Thyroid gland (tissue), 4 donors: ENCODE measurements at regions of chr6 and their contacts with region 1.

Region 1: DNA sequence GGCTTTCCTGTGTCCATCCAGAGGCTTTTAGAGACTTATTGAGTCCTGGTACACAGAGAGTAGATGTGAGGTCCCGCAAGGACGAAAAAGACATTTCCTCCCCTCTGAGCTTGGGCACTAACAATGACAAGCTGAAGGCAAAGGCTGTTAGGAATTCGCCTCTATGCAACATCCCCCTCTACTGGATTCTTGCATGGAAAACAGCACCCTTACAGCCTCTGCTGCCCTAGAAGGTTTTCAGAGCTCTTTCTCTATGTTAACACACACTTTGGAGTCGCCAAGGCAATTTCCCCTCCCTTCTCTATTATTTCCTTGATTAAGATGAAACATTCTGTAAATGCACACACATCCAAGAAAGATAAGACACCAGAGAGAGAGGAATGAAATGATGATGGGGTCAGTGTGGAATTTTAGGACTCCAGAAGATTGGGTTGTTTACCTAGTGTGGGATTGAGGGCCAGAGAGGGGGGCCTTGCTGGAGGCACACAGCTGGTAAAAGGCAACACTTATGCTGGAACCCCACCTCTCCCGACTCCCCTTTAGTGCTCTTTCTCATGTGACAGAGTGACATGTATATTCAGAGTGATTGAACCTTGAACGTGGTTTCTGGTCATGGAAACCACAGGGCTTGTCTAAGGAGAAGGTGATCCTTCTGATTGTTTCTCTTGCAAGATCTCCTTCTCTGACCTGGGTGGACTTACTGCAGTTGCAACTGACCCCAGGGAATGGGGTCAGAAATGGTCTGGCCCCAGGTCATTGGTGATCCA is 300.7 kb downstream of the CLIC5 start:
- DNase-seq: peak; percentile 49 to 52
- H3K4me3 ChIP-seq: no peak overlapping the region
- H3K27ac ChIP-seq: no peak overlapping the region
- H3K4me1 ChIP-seq: no peaks in the 10 kb centered on the region
- H3K27me3 ChIP-seq: no peaks in the 10 kb centered on the region
- CTCF ChIP-seq: peak; percentile 40 to 88 (median 76)
- POLR2A ChIP-seq: no peak

Region 2: GRCh38 chr6:44475779-44476434 is 1239.0 kb before region 1 on chr6:
- intact Hi-C with region 1: loop called (anchors 10 kb)
- DNase-seq: peak; percentile 83 to 89
- H3K4me3 ChIP-seq: no peak overlapping the region
- H3K27ac ChIP-seq: peak overlapping the region; percentile 52 to 96 (median 84)
- H3K4me1 ChIP-seq: peaks cover 18 to 34% of the 10 kb centered on the region in 2 donors
- H3K27me3 ChIP-seq: no peaks in the 10 kb centered on the region
- CTCF ChIP-seq: peak; percentile 65 to 99 (median 94)
- POLR2A ChIP-seq: peak in 1 of 2 donors; percentile 21

Region 3: GRCh38 chr6:44655412-44656342 is 1059.2 kb before region 1 on chr6:
- intact Hi-C with region 1: loop called (anchors 5 kb)
- DNase-seq: peak; percentile 72 to 79
- H3K4me3 ChIP-seq: no peak overlapping the region
- H3K27ac ChIP-seq: no peak overlapping the region
- H3K4me1 ChIP-seq: peaks cover 0 to 8% of the 10 kb centered on the region in 2 donors
- H3K27me3 ChIP-seq: no peaks in the 10 kb centered on the region
- CTCF ChIP-seq: peak; percentile 81 to 95 (median 90)
- POLR2A ChIP-seq: no peak

Region 4: DNA sequence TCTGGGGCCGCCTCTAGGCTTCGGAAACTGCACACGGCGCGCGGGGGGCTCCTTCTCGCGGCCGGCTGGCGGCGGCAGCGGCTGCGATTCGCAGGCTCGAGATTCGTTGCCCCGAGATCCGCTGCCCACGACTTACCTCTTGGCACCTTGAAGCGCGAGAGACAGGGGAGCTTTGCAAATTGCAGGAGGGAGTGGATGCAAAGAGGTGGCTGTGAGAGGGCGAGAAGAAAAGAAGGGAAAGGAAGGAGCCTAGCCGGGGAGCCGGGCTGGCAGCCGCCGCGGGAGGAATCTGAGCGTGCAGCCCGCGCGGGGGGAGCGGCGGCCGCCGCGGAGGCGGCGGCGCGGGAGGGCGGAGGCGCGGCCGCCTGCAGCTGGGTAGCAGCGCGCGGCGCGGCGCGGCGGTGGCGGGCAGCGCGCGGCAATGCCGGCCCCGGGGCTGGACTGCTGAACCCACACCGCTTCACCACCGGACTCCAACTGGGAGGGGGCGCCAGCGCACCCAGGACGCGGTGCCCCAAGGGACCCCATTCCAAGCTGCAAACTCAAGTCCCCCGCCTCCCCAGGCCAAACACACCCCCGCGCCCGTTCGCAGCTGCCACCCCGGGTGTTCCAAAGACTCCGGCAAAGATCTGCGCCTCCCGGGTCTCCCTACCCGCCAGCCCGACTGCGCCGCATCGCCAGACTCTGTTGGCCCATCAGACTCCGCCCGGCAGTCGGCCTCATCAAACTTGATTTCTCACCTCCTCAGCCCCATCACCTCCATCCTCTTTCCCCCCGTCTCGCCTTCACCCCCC is 293.0 kb before region 1 on chr6:
- intact Hi-C with region 1: loop called (anchors 10 kb)
- DNase-seq: peak; percentile 45 to 59
- H3K4me3 ChIP-seq: peak overlapping the region; percentile 15 to 48 (median 43)
- H3K27ac ChIP-seq: peak overlapping the region in 2 of 3 donors; percentile 39 to 83
- H3K4me1 ChIP-seq: peaks cover 26 to 36% of the 10 kb centered on the region in 2 donors
- H3K27me3 ChIP-seq: peaks cover 31% of the 10 kb centered on the region
- CTCF ChIP-seq: no peak
- POLR2A ChIP-seq: no peak

Region 5: DNA sequence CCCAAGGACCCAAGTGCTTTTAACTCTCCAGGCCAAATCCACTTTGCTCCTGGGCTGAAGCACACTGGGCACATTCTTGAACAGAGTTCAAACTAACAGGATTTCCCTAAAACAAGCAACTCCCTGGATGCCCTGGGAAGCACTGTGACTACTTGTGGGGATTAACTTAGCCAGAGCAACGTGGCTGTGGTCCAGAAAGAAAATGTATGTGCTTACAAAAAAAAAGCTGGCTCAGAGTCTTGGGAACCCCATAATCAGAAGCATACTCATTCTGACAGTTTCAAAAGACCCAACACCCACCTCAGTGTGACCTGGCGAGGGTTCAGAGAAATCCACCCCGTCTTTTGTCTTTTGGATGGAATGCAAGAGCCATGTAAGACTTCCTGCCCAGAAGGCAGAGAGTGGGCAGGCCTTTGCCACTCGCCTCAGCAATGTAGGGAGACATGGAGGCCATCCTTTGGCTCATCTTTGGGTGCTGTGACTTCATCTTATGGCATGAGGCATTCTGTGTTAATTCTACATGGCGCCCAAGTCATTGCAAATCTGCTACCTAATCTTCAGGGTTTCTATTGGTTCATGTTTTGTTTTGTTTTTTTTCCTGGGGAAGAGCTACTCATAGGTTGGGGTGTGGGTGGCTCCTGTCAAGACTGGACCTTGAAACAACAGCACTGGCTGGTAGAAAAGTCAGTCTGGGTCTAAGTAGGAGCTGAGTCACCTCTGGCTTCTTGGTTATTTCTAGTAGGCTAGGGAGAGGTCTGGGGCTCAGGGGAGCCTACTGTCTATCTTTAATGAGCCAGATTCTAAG is 88.6 kb before region 1 on chr6:
- intact Hi-C with region 1: no loop called
- DNase-seq: peak; percentile 48 to 54
- H3K4me3 ChIP-seq: no peak overlapping the region
- H3K27ac ChIP-seq: no peak overlapping the region
- H3K4me1 ChIP-seq: peaks cover 15 to 18% of the 10 kb centered on the region in 2 donors
- H3K27me3 ChIP-seq: no peaks in the 10 kb centered on the region
- CTCF ChIP-seq: no peak
- POLR2A ChIP-seq: no peak

Region 6: GRCh38 chr6:45757443-45758130 is 42.7 kb after region 1 on chr6:
- intact Hi-C with region 1: no loop called
- DNase-seq: no peak
- H3K4me3 ChIP-seq: no peak overlapping the region
- H3K27ac ChIP-seq: peak overlapping the region in 1 of 3 donors; percentile 1
- H3K4me1 ChIP-seq: peaks cover 0 to 6% of the 10 kb centered on the region in 2 donors
- H3K27me3 ChIP-seq: no peaks in the 10 kb centered on the region
- CTCF ChIP-seq: no peak
- POLR2A ChIP-seq: no peak

Region 7: DNA sequence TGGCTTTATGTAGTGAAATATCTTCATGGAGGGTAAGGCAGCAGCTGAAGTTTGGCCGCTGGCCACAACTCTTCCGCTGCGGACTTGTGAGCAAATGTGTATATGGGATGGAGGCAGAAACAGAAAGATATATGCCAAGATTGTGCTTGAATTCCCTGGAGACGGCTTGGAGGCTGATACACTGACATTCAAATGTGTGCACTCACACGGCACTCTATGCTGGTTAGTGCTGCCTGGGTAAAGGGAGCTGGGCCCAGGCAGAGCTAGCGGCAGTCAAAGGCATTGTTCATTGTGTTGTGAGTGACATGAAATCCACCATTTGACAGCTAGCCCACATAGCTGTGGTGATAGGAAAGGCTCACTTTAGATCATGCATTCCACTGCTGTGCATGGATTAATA is 98.0 kb after region 1 on chr6:
- intact Hi-C with region 1: no loop called
- DNase-seq: no peak
- H3K4me3 ChIP-seq: no peak overlapping the region
- H3K27ac ChIP-seq: no peak overlapping the region
- H3K4me1 ChIP-seq: no peaks in the 10 kb centered on the region
- H3K27me3 ChIP-seq: no peaks in the 10 kb centered on the region
- CTCF ChIP-seq: no peak
- POLR2A ChIP-seq: no peak

Region 8: DNA sequence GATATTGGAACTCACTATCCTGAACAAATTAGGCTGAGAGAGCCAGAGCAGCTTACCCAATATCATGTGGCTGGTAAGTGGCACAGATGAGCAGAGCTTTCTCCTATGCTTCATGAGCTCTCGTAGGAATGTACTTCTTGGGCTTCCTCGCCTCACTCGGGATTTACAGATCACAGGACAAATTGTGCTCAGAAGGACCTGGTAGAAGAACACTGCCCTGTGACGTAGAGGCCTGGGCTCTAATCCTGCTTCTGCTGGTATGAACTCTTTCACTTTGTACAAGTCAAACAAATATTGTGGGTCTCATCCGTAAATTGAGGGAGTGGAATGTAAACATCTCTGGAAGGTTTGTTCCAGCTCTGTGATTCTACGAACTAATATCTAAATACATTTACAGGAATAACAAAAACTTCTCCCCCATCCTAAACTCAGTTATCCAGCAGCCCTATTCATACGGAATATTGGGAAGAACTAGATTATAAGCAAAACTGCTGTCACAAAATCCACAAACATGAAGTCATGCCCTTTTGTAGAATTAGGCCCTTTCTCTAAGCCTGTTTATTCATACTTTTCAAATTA is 113.1 kb after region 1 on chr6:
- intact Hi-C with region 1: no loop called
- DNase-seq: no peak
- H3K4me3 ChIP-seq: no peak overlapping the region
- H3K27ac ChIP-seq: no peak overlapping the region
- H3K4me1 ChIP-seq: no peaks in the 10 kb centered on the region
- H3K27me3 ChIP-seq: no peaks in the 10 kb centered on the region
- CTCF ChIP-seq: no peak
- POLR2A ChIP-seq: no peak